Activated CD8-positive, alpha-beta T cell treated with anti-CD3 and anti-CD28 coated beads for 36 hours (primary cell): ENCODE measurements at regions of chr5 and their contacts with region 1.

Region 1: GRCh38 chr5:75236322-75237316 is at the start of gene ANKRD31:
- DNase-seq: peak; percentile 88
- ATAC-seq: peak; percentile 99
- H3K4me3 Mint-ChIP-seq: peak within 1 kb of the TSS; percentile 96
- H3K27ac Mint-ChIP-seq: peak within 1 kb of the TSS; percentile 99
- H3K4me1 Mint-ChIP-seq: peaks cover 10% of the 10 kb centered on the region
- H3K27me3 Mint-ChIP-seq: no peaks in the 10 kb centered on the region
- CTCF ChIP-seq: peak; percentile 76
- total RNA-seq, gene ANKRD31: 0.94 to 0.99 TPM

Region 2: DNA sequence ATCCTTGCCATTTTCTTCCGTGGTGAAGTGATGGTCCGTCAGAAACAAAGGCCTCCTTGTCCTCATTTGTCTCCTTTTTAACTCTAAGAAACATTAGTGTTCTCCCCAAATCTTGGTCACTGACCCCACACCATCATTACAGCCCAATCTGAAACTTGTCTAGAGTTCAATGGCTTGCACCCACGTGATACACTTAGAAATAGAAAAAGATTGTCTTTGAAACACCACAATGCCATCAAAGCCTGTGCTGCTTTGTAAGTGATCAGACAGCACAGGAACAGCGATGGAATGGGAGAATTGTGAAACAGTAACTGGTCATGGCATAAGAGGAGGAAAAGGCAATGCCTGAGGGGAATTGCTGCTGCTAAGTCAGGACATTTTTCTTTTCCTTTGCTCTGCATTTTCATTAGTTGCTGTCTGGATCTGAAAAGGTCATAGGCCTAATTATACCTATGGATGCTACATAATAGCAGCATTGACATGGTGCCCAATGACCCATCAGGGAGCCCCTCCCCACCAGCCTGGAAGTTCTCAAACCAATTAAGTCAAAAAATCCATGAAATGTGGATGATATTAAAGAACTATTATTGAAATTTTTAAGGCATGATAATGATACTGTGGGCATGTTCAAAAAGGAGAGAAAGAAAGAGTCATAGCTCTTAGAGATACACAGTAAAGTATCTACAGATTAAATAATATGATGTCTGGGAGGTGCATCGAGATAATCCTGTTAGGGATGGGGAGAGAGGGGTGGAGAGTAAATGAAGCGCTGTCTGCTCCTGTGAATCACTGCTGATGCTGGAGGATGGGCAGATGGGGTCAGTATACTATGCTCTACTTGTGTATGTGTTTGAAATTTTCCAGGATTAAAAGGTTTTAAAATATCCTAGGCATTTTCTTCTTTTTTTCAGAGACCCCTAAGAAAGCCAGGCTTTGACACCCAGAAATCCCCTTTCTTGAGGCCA is 679.7 kb before region 1 on chr5:
- CTCF ChIA-PET with region 1: no interaction called
- POLR2A ChIA-PET with region 1: no interaction called
- intact Hi-C with region 1: no loop called
- DNase-seq: no peak
- ATAC-seq: no peak
- H3K4me3 Mint-ChIP-seq: no peak overlapping the region
- H3K27ac Mint-ChIP-seq: no peak overlapping the region
- H3K4me1 Mint-ChIP-seq: no peaks in the 10 kb centered on the region
- H3K27me3 Mint-ChIP-seq: peaks cover 3% of the 10 kb centered on the region
- CTCF ChIP-seq: no peak

Region 3: DNA sequence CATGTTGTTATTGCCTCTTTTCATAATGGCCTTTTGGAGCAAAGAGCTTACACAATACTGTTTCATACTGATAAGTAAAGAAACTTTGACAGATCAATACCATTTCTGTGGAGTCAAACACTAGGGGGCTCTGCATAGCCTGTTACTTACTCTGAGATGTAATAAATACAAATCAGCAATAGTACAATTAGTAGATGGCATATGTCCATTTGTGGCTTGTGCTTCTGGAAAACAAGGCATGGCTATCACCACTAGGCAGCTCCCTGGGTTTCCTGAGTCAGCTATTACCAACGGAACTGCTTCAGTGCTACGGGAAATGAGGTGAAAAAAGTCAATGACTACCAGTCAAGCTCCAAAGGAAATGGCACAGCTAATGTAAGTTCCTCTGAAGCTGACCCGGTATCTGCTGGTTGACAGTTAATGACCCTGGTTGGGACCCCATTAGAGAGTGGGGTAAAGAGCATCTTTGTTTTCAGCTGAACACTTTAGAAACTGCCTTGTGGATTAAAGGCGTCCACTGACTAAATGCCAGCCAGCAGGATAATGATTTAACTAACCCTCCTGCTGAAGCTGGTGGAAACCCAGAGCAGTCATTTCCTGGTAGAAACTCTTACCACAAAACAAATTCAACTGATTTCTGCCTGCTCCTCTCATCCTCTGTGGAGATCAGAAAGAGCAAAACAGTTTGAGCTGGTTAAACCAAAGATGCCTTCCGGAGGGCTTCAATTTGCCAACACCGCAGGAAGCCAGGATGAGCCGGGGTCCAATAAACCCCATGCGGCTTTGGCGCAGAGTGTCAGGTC is 301.5 kb before region 1 on chr5:
- CTCF ChIA-PET with region 1: interaction called, 10 read pairs
- POLR2A ChIA-PET with region 1: no interaction called
- intact Hi-C with region 1: no loop called
- DNase-seq: peak; percentile 45
- ATAC-seq: peak; percentile 87
- H3K4me3 Mint-ChIP-seq: peak overlapping the region; percentile 46
- H3K27ac Mint-ChIP-seq: peak overlapping the region; percentile 83
- H3K4me1 Mint-ChIP-seq: peaks cover 27% of the 10 kb centered on the region
- H3K27me3 Mint-ChIP-seq: peaks cover 4% of the 10 kb centered on the region
- CTCF ChIP-seq: peak; percentile 66

Region 4: DNA sequence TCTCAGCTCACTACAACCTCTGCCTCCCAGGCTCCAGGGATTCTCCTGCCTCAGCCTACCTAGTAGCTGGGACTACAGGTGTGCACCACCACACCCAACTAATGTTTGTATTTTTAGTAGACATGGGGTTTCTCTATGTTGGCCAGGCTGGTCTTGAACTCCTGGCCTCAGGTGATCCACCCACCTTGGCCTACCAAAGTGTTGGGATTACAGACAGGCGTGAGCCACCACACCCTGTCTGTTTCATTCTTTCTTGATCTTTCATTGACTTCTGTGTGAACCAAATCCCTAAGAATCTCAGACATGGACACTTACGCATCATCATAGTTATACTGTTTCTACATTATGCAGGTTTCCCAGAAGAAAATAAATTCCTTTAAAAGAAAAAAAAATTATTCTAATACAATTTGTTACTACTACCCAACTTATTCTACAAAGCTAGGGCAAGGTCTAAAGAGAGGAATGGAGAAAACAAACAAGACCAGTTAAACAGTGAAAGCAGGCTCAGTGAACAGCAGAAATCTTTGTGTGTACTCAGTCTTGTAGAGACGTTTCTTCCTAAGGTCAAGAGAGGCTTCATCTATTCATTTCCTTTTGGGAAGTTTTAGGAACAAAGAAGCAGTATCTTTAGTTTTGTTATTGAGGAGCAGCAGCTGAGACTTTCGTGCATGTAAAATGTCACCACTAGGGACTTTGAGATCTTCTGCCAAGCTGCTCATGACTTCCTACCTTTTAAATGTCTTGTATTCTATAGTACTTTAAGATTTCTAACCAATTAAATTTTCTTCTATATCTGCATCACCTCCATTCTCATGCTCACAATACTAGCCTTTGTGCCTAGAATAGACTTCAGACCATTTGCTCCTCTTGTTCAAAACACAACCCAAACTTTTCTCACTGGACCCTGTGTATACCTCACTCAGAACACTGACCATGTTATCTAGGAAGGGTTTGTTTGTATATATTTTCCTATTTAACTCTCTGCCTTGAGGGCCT is 94.8 kb after region 1 on chr5:
- CTCF ChIA-PET with region 1: interaction called, 21 read pairs
- POLR2A ChIA-PET with region 1: no interaction called
- intact Hi-C with region 1: loop called (anchors 2 kb)
- DNase-seq: no peak
- ATAC-seq: no peak
- H3K4me3 Mint-ChIP-seq: no peak overlapping the region
- H3K27ac Mint-ChIP-seq: no peak overlapping the region
- H3K4me1 Mint-ChIP-seq: no peaks in the 10 kb centered on the region
- H3K27me3 Mint-ChIP-seq: peaks cover 2% of the 10 kb centered on the region
- CTCF ChIP-seq: no peak

Region 5: GRCh38 chr5:75336625-75337339 is 100.2 kb after region 1 on chr5 and contains the start of gene HMGCR:
- CTCF ChIA-PET with region 1: interaction called, 21 read pairs
- POLR2A ChIA-PET with region 1: interaction called, 8 read pairs
- intact Hi-C with region 1: loop called (anchors 2 kb)
- DNase-seq: peak; percentile 99
- ATAC-seq: peak; percentile 96
- H3K4me3 Mint-ChIP-seq: no peak within 1 kb of the TSS
- H3K27ac Mint-ChIP-seq: no peak within 1 kb of the TSS
- H3K4me1 Mint-ChIP-seq: peaks cover 32% of the 10 kb centered on the region
- H3K27me3 Mint-ChIP-seq: no peaks in the 10 kb centered on the region
- CTCF ChIP-seq: peak; percentile 6
- total RNA-seq, gene HMGCR: 50.3 to 50.8 TPM

Region 6: DNA sequence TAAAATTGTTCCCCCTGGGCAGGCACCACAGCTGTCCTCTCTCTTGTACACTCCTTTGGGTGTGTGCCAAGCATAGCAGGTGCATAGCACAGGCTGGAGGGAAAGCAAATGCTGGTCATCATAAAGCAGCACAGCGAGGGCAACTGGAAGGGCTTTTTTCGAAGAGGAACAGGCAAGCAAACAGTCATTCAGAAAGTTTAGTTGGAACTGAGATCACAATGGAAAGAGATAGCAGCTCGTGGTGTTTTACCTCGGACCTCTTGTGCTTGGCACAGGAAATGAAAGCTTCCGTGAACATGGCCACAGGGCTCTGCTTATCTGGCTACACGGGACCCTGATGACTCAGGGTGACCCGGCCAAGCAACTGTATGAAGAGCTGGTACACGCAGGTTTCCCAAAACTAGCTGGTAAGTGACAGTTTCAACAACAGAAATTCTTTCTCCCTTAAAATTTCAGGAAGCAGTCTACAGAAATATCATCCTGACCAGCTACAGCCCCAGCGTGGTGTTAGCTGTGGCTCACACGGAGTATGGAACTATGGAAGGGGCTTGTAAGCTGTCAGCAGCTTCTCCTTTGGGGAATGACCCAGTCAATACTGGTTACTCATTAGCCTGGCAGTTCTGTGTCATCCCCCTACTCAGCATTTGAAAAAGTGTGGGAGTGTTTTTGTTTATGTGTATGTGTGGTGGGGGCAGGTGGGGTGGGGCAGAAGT is 432.5 kb after region 1 on chr5:
- CTCF ChIA-PET with region 1: interaction called, 5 read pairs
- POLR2A ChIA-PET with region 1: no interaction called
- intact Hi-C with region 1: loop called (anchors 10 kb)
- DNase-seq: peak; percentile 86
- ATAC-seq: peak; percentile 98
- H3K4me3 Mint-ChIP-seq: peak overlapping the region; percentile 66
- H3K27ac Mint-ChIP-seq: peak overlapping the region; percentile 86
- H3K4me1 Mint-ChIP-seq: peaks cover 35% of the 10 kb centered on the region
- H3K27me3 Mint-ChIP-seq: no peaks in the 10 kb centered on the region
- CTCF ChIP-seq: no peak